ENCODE measurements at regions of chr19 and their contacts with region 1.

Region 1: GRCh38 chr19:10936661-10937084 is 8.1 kb downstream of the TIMM29 start:
- DNase-seq: peak in 6 of 14 experiments; percentile 11 to 78 (median 52)
- ATAC-seq: peak; percentile 93
- H3K4me3 ChIP-seq: no peak overlapping the region
- H3K4me3 Mint-ChIP-seq: no peak overlapping the region
- H3K27ac ChIP-seq: no peak overlapping the region
- H3K27ac Mint-ChIP-seq: no peak overlapping the region
- H3K4me1 ChIP-seq: peaks cover 6% of the 10 kb centered on the region
- H3K4me1 Mint-ChIP-seq: peaks cover 4% of the 10 kb centered on the region
- H3K27me3 ChIP-seq: no peaks in the 10 kb centered on the region
- H3K27me3 Mint-ChIP-seq: no peaks in the 10 kb centered on the region
- CTCF ChIP-seq: peak; percentile 66

Region 2: GRCh38 chr19:10952809-10953208 is 16.1 kb after region 1 on chr19:
- CTCF ChIA-PET with region 1: interaction called, 19 read pairs
- POLR2A ChIA-PET with region 1: no interaction called
- intact Hi-C with region 1: no loop called
- DNase-seq: no peak
- ATAC-seq: no peak
- H3K4me3 ChIP-seq: no peak overlapping the region
- H3K4me3 Mint-ChIP-seq: no peak overlapping the region
- H3K27ac ChIP-seq: no peak overlapping the region
- H3K27ac Mint-ChIP-seq: no peak overlapping the region
- H3K4me1 ChIP-seq: no peaks in the 10 kb centered on the region
- H3K4me1 Mint-ChIP-seq: no peaks in the 10 kb centered on the region
- H3K27me3 ChIP-seq: no peaks in the 10 kb centered on the region
- H3K27me3 Mint-ChIP-seq: no peaks in the 10 kb centered on the region
- CTCF ChIP-seq: no peak

Region 3: DNA sequence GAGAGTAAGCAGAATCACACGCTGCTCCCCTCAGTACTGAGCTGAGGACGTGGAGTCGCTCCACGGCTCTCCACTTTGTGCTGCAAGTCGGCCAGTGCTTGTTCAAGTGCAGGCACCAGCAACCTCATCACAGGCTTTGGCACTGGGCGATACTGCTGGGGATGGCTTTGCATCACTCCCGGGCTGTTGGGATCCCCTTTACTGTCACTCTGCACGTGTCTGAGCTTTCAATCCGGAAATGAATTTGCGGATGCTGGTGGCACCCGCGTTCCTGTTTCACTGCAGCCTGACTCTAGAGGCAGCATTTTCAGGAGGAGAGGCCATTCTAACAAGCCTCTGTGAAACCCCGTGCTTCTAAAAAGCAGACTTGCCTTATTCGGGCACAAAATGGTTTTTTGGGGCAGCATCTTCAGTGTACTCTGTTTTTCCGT is 43.3 kb after region 1 on chr19:
- CTCF ChIA-PET with region 1: interaction called, 5 read pairs
- POLR2A ChIA-PET with region 1: no interaction called
- intact Hi-C with region 1: loop called in 1 of 2 experiments (anchors 10 kb)
- DNase-seq: peak in 4 of 14 experiments; percentile 23 to 58 (median 43)
- ATAC-seq: peak; percentile 88
- H3K4me3 ChIP-seq: no peak overlapping the region
- H3K4me3 Mint-ChIP-seq: peak overlapping the region; percentile 58
- H3K27ac ChIP-seq: no peak overlapping the region
- H3K27ac Mint-ChIP-seq: peak overlapping the region; percentile 49
- H3K4me1 ChIP-seq: peaks cover 33% of the 10 kb centered on the region
- H3K4me1 Mint-ChIP-seq: peaks cover 28% of the 10 kb centered on the region
- H3K27me3 ChIP-seq: no peaks in the 10 kb centered on the region
- H3K27me3 Mint-ChIP-seq: no peaks in the 10 kb centered on the region
- CTCF ChIP-seq: no peak

Region 4: DNA sequence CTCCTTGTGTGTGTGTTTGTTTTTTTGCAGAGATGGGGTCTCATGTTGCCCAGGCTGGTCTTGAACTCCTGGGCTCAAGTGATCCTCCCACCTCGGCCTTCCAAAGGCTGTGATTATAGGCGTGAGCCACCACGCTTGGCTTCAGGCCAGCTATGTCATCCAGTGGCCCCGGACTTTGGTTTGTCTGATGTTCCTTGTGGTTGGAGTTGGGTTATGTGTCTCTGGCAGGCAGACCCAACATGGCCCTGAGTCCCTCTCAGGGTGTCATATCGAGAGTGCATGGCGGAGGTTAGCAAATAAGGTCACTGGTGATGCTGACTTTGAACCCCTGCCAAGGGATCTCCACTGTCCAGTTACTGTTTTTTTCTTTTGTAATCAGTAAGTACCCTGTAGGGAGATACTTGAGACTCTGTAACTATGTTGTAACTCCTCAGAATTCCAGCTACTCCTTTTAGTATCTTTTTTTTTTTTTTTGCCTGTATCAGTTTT is 61.4 kb after region 1 on chr19:
- CTCF ChIA-PET with region 1: no interaction called
- POLR2A ChIA-PET with region 1: interaction called, 4 read pairs
- intact Hi-C with region 1: loop called in 1 of 2 experiments (anchors 10 kb)
- DNase-seq: no peak
- ATAC-seq: no peak
- H3K4me3 ChIP-seq: no peak overlapping the region
- H3K4me3 Mint-ChIP-seq: no peak overlapping the region
- H3K27ac ChIP-seq: no peak overlapping the region
- H3K27ac Mint-ChIP-seq: no peak overlapping the region
- H3K4me1 ChIP-seq: no peaks in the 10 kb centered on the region
- H3K4me1 Mint-ChIP-seq: no peaks in the 10 kb centered on the region
- H3K27me3 ChIP-seq: no peaks in the 10 kb centered on the region
- H3K27me3 Mint-ChIP-seq: no peaks in the 10 kb centered on the region
- CTCF ChIP-seq: no peak

Region 5: DNA sequence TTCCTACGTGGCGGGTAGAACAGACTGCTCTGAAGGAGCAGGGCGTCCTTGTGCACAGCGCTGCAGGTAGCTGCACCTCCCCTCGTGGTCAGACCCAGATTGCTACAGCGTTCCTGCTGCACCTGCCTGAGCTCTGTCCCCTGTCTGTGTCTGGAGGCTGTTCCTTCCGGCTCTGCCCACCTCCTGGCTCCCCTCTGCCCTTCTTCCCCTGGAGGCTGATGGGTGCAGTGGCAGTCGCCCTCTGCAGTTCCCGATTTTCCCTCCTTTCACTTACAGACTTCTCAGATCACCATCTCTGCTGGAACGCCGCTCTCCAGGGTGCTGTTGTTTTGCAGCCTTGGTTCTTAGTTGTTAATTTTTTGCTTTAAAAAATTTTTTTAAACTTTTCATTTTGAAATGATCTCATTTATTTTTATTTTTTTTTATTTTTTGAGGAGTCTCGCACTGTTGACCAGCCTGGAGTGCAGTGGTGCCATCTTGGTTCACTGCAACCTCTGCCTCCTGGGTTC is 77.8 kb after region 1 on chr19:
- CTCF ChIA-PET with region 1: interaction called, 5 read pairs
- POLR2A ChIA-PET with region 1: no interaction called
- intact Hi-C with region 1: loop called in 1 of 2 experiments (anchors 5 kb)
- DNase-seq: no peak
- ATAC-seq: no peak
- H3K4me3 ChIP-seq: no peak overlapping the region
- H3K4me3 Mint-ChIP-seq: no peak overlapping the region
- H3K27ac ChIP-seq: no peak overlapping the region
- H3K27ac Mint-ChIP-seq: no peak overlapping the region
- H3K4me1 ChIP-seq: no peaks in the 10 kb centered on the region
- H3K4me1 Mint-ChIP-seq: no peaks in the 10 kb centered on the region
- H3K27me3 ChIP-seq: no peaks in the 10 kb centered on the region
- H3K27me3 Mint-ChIP-seq: no peaks in the 10 kb centered on the region
- CTCF ChIP-seq: no peak

Region 6: DNA sequence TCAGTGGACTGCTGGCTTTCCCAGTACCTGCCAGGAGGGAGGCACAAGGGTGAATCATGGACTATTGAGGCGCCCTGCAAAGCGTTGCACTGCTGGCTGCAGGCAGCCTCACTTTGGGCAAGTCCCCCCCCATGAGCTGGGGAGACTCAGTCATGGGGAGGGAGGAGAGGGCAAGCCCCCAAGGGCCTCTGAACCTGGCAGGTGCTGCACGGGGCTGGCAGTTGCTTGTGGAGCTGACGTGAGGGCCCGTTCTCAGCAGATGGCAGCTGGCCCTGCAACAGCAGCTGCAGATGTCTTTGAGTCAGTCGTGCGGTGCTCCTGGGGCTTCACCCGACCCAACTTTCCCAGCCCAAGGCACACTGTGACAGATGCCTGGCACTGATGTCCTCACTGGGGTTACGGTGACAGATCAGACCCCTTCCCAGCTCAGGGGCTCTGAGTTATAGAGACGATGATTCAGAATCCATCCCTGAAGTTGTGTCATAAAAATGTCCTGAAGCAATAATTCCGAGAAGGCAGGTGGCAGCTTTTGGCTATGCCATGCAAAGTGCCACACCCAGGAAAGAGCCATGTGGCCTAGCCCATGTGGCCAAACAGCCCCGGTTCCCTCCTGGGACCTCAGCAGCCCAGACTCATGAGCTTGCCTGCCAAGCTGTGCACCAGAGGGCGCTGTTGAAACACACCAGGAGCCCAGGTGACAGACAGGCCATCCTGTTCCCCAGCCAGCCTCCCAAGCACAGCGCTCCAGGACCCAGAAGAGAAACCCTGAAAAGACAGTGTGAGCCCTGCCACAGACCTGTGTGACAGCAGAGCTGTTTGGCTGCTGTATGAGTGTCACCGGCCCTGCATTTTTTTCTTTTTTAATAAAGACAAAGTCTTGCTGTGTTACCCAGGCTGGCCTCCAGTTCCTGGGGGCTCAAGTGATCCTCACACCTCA is 99.0 kb after region 1 on chr19:
- CTCF ChIA-PET with region 1: interaction called, 11 read pairs
- POLR2A ChIA-PET with region 1: interaction called, 4 read pairs
- intact Hi-C with region 1: no loop called
- DNase-seq: peak; percentile 78 to 95 (median 85)
- ATAC-seq: peak; percentile 97
- H3K4me3 ChIP-seq: no peak overlapping the region
- H3K4me3 Mint-ChIP-seq: no peak overlapping the region
- H3K27ac ChIP-seq: no peak overlapping the region
- H3K27ac Mint-ChIP-seq: no peak overlapping the region
- H3K4me1 ChIP-seq: peaks cover 10% of the 10 kb centered on the region
- H3K4me1 Mint-ChIP-seq: peaks cover 9% of the 10 kb centered on the region
- H3K27me3 ChIP-seq: no peaks in the 10 kb centered on the region
- H3K27me3 Mint-ChIP-seq: no peaks in the 10 kb centered on the region
- CTCF ChIP-seq: peak; percentile 87

Region 7: DNA sequence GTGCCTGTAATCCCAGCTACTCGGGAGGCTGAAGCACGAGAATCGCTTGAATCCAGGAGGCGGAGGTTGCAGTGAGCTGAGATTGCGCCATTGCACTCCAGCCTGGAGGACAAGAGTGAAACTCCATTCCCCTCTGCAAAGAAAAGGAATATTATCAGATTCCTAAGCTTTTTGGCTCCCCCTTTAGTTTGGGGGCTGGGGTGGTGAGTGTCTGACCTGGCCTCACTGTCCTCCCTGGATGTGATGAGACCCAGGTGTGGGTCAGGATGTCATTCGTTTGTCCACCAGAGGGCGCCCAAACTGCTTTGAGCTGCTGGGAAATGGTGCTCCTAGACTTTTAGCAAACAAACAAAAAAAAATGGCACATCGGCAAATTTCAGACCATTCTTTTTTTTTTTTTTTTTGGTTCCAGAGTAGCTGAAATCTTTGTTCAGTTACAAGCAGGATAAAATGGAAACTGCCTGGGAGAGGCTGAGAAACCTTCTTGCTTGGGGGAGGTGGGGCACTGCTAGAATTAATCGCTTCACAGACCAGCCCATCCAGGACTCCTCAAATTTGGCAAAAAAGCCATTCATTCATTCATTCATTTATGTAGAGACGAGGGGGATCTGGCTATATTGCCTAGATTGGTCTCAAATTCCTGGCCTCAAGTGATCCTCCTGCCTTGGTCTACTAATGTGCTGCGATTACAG is 189.5 kb after region 1 on chr19:
- CTCF ChIA-PET with region 1: interaction called, 3 read pairs
- POLR2A ChIA-PET with region 1: no interaction called
- intact Hi-C with region 1: loop called (anchors 2 to 5 kb)
- DNase-seq: peak; percentile 65 to 88 (median 74)
- ATAC-seq: peak; percentile 64
- H3K4me3 ChIP-seq: no peak overlapping the region
- H3K4me3 Mint-ChIP-seq: no peak overlapping the region
- H3K27ac ChIP-seq: no peak overlapping the region
- H3K27ac Mint-ChIP-seq: no peak overlapping the region
- H3K4me1 ChIP-seq: peaks cover 12% of the 10 kb centered on the region
- H3K4me1 Mint-ChIP-seq: no peaks in the 10 kb centered on the region
- H3K27me3 ChIP-seq: no peaks in the 10 kb centered on the region
- H3K27me3 Mint-ChIP-seq: no peaks in the 10 kb centered on the region
- CTCF ChIP-seq: peak; percentile 82

Measured in CD4-positive, alpha-beta T cell (primary cell).